ENCODE measurements at regions of chr14 and their contacts with region 1.

Region 1: DNA sequence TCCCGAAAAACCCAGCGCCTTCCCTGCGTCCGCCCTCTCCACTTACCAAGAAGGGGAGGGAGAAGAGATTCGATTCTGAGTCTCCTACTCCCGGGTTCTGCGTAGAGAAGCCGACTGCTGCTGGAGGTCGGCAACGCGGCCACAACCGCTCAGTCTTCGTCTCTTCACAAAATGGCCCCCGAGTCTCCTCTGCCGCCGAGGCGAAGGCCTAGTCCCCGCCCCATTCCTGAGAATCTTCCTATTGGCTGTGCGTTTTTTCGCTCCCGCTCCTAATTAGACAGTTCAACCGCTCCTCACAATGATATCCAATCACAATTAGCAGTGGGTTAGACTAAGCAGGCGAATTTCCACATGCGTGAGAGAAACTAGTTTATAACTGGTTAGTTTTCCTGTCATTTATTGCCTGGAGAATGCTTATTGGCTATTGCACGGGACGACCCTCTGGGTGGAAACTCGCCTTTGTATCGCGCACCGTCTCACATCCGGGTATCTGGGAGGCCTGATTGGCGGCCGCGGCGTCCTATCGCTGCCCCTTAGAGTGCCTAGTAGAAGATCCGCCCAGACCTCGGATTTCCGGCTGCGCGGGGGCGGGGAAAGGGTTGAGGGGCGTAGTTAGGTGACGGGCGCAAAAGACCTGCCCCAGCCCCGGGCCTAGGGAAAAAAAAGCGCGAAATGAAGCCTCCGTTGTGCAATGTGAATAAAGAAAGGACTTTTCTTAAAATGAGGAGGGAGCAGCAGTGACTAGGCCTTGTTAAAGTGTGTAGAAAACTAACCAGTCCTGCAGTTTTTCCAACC is at the start of gene HNRNPC:
- DNase-seq: peak; percentile 100
- ATAC-seq: peak; percentile 90
- H3K4me3 ChIP-seq: peak within 1 kb of the TSS; percentile 99
- H3K4me3 Mint-ChIP-seq: peak within 1 kb of the TSS; percentile 92 to 100 (median 99)
- H3K27ac ChIP-seq: peak within 1 kb of the TSS; percentile 97
- H3K27ac Mint-ChIP-seq: peak within 1 kb of the TSS; percentile 97 to 100 (median 100)
- H3K4me1 ChIP-seq: peaks cover 19 to 21% of the 10 kb centered on the region in 2 donors
- H3K4me1 Mint-ChIP-seq: peaks cover 21 to 43% (median 37%) of the 10 kb centered on the region in 7 donors
- H3K27me3 ChIP-seq: no peaks in the 10 kb centered on the region
- H3K27me3 Mint-ChIP-seq: no peaks in the 10 kb centered on the region
- total RNA-seq, gene HNRNPC: 469 to 687 (median 532) TPM

Region 2: GRCh38 chr14:20343092-20343861 is 926.2 kb before region 1 on chr14 and contains the start of gene PARP2:
- CTCF ChIA-PET with region 1: no interaction called
- POLR2A ChIA-PET with region 1: no interaction called
- intact Hi-C with region 1: loop called in 1 of 2 experiments (anchors 2 kb)
- DNase-seq: peak; percentile 82 to 94 (median 93)
- ATAC-seq: peak; percentile 86
- H3K4me3 ChIP-seq: peak within 1 kb of the TSS; percentile 74
- H3K4me3 Mint-ChIP-seq: peak within 1 kb of the TSS; percentile 82 to 99 (median 95)
- H3K27ac ChIP-seq: peak within 1 kb of the TSS; percentile 91
- H3K27ac Mint-ChIP-seq: peak within 1 kb of the TSS; percentile 91 to 98 (median 97)
- H3K4me1 ChIP-seq: peaks cover 4 to 5% of the 10 kb centered on the region in 2 donors
- H3K4me1 Mint-ChIP-seq: peaks cover 6 to 27% (median 18%) of the 10 kb centered on the region in 7 donors
- H3K27me3 ChIP-seq: no peaks in the 10 kb centered on the region
- H3K27me3 Mint-ChIP-seq: peaks cover 0 to 7% (median 0%) of the 10 kb centered on the region in 5 donors
- total RNA-seq, gene PARP2: 15.3 to 24.5 (median 21.3) TPM

Region 3: GRCh38 chr14:20682435-20683124 is 586.9 kb before region 1 on chr14:
- CTCF ChIA-PET with region 1: no interaction called
- POLR2A ChIA-PET with region 1: no interaction called
- intact Hi-C with region 1: loop called in 1 of 2 experiments (anchors 5 kb)
- DNase-seq: peak; percentile 63 to 83 (median 79)
- ATAC-seq: peak; percentile 75
- H3K4me3 ChIP-seq: peak overlapping the region; percentile 98
- H3K4me3 Mint-ChIP-seq: no peak overlapping the region
- H3K27ac ChIP-seq: peak overlapping the region; percentile 91
- H3K27ac Mint-ChIP-seq: no peak overlapping the region
- H3K4me1 ChIP-seq: peaks cover 18 to 24% of the 10 kb centered on the region in 2 donors
- H3K4me1 Mint-ChIP-seq: peaks cover 14 to 35% (median 32%) of the 10 kb centered on the region in 7 donors
- H3K27me3 ChIP-seq: no peaks in the 10 kb centered on the region
- H3K27me3 Mint-ChIP-seq: no peaks in the 10 kb centered on the region

Region 4: GRCh38 chr14:21229821-21230220 is 39.6 kb before region 1 on chr14:
- CTCF ChIA-PET with region 1: interaction called, 3 read pairs
- POLR2A ChIA-PET with region 1: interaction called, 12 read pairs
- intact Hi-C with region 1: loop called in 1 of 2 experiments (anchors 2 kb)
- DNase-seq: peak in 7 of 9 donors; percentile 52 to 76 (median 65)
- ATAC-seq: peak; percentile 93
- H3K4me3 ChIP-seq: no peak overlapping the region
- H3K4me3 Mint-ChIP-seq: peak overlapping the region; percentile 27 to 76 (median 66)
- H3K27ac ChIP-seq: peak overlapping the region; percentile 68
- H3K27ac Mint-ChIP-seq: peak overlapping the region; percentile 82 to 94 (median 89)
- H3K4me1 ChIP-seq: peaks cover 48 to 73% of the 10 kb centered on the region in 2 donors
- H3K4me1 Mint-ChIP-seq: peaks cover 44 to 84% (median 74%) of the 10 kb centered on the region in 7 donors
- H3K27me3 ChIP-seq: no peaks in the 10 kb centered on the region
- H3K27me3 Mint-ChIP-seq: no peaks in the 10 kb centered on the region

Region 5: DNA sequence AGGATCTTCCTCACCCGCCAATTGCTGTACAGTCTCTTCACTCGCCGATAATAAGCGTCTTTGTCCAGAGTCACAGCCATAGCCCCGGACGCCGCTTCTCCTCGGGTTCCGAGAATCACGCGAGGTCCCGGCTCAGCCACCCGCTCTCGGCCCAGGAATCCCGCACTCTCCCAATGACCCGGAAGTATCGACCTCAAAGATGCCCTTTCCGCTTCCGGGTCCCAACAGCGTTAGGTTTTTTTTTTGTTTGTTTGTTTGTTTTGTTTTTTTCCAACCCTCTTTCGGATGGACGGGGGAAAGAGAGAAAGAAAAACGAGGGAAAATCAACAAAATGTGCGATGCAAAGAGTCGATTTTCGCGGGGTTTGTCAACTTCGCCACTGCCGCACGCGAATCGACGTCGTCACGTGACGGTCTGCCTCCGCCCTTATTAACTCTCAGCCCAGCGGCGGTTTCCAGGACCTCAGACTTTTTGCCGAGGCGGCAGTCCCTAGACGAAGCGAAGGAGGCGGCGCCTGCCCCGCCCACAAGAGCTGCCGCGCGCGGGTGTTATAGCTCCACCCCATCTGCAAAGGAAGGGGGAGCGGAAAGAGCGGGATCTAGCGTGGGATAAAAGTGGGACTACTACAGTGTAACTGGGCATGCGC is 114.5 kb after region 1 on chr14 and contains the start of gene SUPT16H:
- CTCF ChIA-PET with region 1: no interaction called
- POLR2A ChIA-PET with region 1: interaction called, 6 read pairs
- intact Hi-C with region 1: loop called (anchors 1 kb)
- DNase-seq: peak; percentile 78 to 91 (median 86)
- ATAC-seq: peak; percentile 97
- H3K4me3 ChIP-seq: peak within 1 kb of the TSS; percentile 98
- H3K4me3 Mint-ChIP-seq: peak within 1 kb of the TSS; percentile 92 to 99 (median 97)
- H3K27ac ChIP-seq: peak within 1 kb of the TSS; percentile 87
- H3K27ac Mint-ChIP-seq: peak within 1 kb of the TSS; percentile 97 to 100 (median 99)
- H3K4me1 ChIP-seq: peaks cover 3 to 11% of the 10 kb centered on the region in 2 donors
- H3K4me1 Mint-ChIP-seq: peaks cover 26 to 52% (median 45%) of the 10 kb centered on the region in 7 donors
- H3K27me3 ChIP-seq: no peaks in the 10 kb centered on the region
- H3K27me3 Mint-ChIP-seq: no peaks in the 10 kb centered on the region
- total RNA-seq, gene SUPT16H: 46.1 to 104 (median 78.6) TPM

Region 6: GRCh38 chr14:21476925-21477681 is 207.7 kb after region 1 on chr14 and contains the starts of genes RAB2B and TOX4:
- CTCF ChIA-PET with region 1: no interaction called
- POLR2A ChIA-PET with region 1: interaction called, 3 read pairs
- intact Hi-C with region 1: loop called (anchors 1 kb)
- DNase-seq: peak; percentile 83 to 98 (median 97)
- ATAC-seq: peak; percentile 99
- H3K4me3 ChIP-seq: peak within 1 kb of the TSS; percentile 99
- H3K4me3 Mint-ChIP-seq: peak within 1 kb of the TSS; percentile 96 to 100 (median 99)
- H3K27ac ChIP-seq: peak within 1 kb of the TSS; percentile 88
- H3K27ac Mint-ChIP-seq: peak within 1 kb of the TSS; percentile 93 to 100 (median 98)
- H3K4me1 ChIP-seq: peaks cover 21 to 22% of the 10 kb centered on the region in 2 donors
- H3K4me1 Mint-ChIP-seq: peaks cover 18 to 74% (median 58%) of the 10 kb centered on the region in 7 donors
- H3K27me3 ChIP-seq: no peaks in the 10 kb centered on the region
- H3K27me3 Mint-ChIP-seq: no peaks in the 10 kb centered on the region
- total RNA-seq, gene RAB2B: 26.6 to 32.8 (median 30.5) TPM
- total RNA-seq, gene TOX4: 78.5 to 116 (median 86.5) TPM

Region 7: DNA sequence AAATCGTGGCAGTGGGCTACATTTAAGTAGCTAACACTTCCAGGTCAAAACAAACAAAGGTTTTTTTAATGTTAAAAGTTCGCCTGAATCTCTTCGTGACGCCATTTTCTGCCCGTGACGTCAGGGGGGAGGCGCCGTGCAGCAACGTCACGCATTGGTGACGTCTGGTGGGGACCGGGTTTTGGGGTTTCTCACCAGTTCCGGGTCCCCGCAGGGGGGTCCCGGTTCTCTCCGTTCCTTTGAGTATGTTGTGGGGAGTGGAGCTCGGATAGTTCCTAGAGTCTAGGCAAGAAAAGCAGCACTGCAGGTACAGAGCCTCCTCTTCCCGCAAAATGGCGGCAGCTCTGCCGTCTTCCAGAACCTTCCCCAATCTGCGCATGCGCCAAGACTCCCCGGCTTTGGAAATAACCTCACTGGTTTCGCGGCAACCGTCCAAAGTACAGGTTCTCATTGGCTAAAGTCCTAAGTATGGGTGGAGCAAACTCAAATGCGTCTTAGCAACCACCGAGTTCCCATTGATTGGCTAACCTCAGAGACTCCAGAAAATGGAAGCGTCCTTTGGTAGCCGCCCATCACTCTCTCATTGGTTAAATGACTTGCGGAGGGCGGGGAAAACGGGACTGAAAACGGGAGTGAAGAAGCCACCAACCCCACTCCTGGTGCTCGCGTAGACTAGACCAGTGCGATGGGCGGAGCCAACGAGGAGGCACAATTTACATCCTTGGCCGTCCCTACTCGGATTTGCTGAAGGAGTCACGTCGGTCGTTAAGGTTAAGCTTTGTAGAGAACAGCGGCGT is 1649.6 kb after region 1 on chr14 and contains the start of gene RBM23:
- CTCF ChIA-PET with region 1: no interaction called
- POLR2A ChIA-PET with region 1: interaction called, 3 read pairs
- intact Hi-C with region 1: loop called in 1 of 2 experiments (anchors 2 kb)
- DNase-seq: peak; percentile 98 to 100 (median 100)
- ATAC-seq: peak; percentile 92
- H3K4me3 ChIP-seq: peak within 1 kb of the TSS; percentile 96
- H3K4me3 Mint-ChIP-seq: peak within 1 kb of the TSS; percentile 93 to 100 (median 97)
- H3K27ac ChIP-seq: peak within 1 kb of the TSS; percentile 98
- H3K27ac Mint-ChIP-seq: peak within 1 kb of the TSS; percentile 100
- H3K4me1 ChIP-seq: peaks cover 0 to 19% of the 10 kb centered on the region in 2 donors
- H3K4me1 Mint-ChIP-seq: peaks cover 18 to 56% (median 49%) of the 10 kb centered on the region in 7 donors
- H3K27me3 ChIP-seq: no peaks in the 10 kb centered on the region
- H3K27me3 Mint-ChIP-seq: peaks cover 0 to 4% (median 0%) of the 10 kb centered on the region in 5 donors
- total RNA-seq, gene RBM23: 91.9 to 140 (median 99.1) TPM

Measured in naive thymus-derived CD4-positive, alpha-beta T cell (primary cell).